Activated CD4-positive, alpha-beta T cell treated with anti-CD3 and anti-CD28 coated beads for 36 hours (primary cell): ENCODE measurements at regions of chr20 and their contacts with region 1.

Region 1: DNA sequence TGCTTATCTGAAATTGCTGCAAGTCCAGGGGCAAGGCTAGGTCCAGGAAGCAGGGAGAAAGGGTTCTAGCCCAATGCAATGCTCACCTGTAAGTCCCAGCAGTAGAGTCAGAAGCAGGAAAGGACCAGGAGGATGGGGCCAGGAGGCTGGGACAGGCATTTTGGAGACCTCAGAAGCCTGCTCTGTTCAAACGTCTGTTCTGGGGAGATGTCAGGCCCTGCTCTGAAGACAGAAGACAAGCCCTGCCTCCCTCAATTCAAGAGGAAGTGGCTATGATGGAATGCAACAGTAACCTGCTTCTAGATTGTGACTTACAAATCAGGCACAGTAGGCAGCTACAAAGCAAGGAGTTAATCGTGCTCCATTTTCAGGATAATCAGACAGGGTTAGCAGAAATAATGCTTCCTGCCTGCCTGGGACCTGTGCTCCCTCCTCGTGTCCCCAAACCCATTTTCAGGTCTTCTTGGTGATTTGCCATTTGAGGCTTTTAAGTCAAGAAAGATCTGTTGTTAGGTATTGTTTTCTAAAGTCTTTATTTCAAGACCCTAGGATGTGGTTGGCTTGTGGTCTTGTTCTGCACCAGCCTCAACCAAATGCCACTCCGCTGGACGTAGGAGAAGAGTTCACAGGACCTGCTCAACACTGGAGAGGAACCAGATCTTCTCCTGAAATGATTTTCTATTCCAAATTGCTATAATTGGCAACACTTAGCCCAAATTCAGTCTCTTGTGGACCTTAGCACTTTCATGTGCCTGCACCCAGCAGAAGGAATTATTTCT is at the start of gene SIRPG:
- DNase-seq: peak; percentile 59
- ATAC-seq: peak; percentile 54
- H3K4me3 Mint-ChIP-seq: peak within 1 kb of the TSS; percentile 84
- H3K27ac Mint-ChIP-seq: peak within 1 kb of the TSS; percentile 98
- H3K4me1 Mint-ChIP-seq: peaks cover 90% of the 10 kb centered on the region
- H3K27me3 Mint-ChIP-seq: no peaks in the 10 kb centered on the region
- total RNA-seq, gene SIRPG: 34.3 to 48.7 TPM

Region 2: GRCh38 chr20:1625083-1625690 is 32.6 kb before region 1 on chr20:
- CTCF ChIA-PET with region 1: no interaction called
- POLR2A ChIA-PET with region 1: no interaction called
- intact Hi-C with region 1: loop called (anchors 1 kb)
- DNase-seq: no peak
- ATAC-seq: peak; percentile 71
- H3K4me3 Mint-ChIP-seq: peak overlapping the region; percentile 8
- H3K27ac Mint-ChIP-seq: peak overlapping the region; percentile 72
- H3K4me1 Mint-ChIP-seq: peaks cover 86% of the 10 kb centered on the region
- H3K27me3 Mint-ChIP-seq: no peaks in the 10 kb centered on the region

Region 3: GRCh38 chr20:1671891-1672669 is 14.3 kb after region 1 on chr20:
- CTCF ChIA-PET with region 1: interaction called, 3 read pairs
- POLR2A ChIA-PET with region 1: no interaction called
- intact Hi-C with region 1: loop called (anchors 1 to 2 kb)
- DNase-seq: peak; percentile 70
- ATAC-seq: peak; percentile 70
- H3K4me3 Mint-ChIP-seq: peak overlapping the region; percentile 57
- H3K27ac Mint-ChIP-seq: peak overlapping the region; percentile 97
- H3K4me1 Mint-ChIP-seq: peaks cover 99% of the 10 kb centered on the region
- H3K27me3 Mint-ChIP-seq: no peaks in the 10 kb centered on the region